Body of pancreas (tissue), 4 donors: ENCODE measurements at regions of chr22 and their contacts with region 1.

Region 1: GRCh38 chr22:19178656-19179496 is at the start of gene SLC25A1:
- DNase-seq: peak; percentile 94 to 98 (median 94)
- ATAC-seq: peak; percentile 87
- H3K4me3 ChIP-seq: peak within 1 kb of the TSS; percentile 35 to 86
- H3K27ac ChIP-seq: peak within 1 kb of the TSS; percentile 71 to 94 (median 92)
- H3K4me1 ChIP-seq: peaks cover 49% of the 10 kb centered on the region
- H3K27me3 ChIP-seq: no peaks in the 10 kb centered on the region
- CTCF ChIP-seq: no peak
- POLR2A ChIP-seq: peak; percentile 50 to 58 (median 54)
- total RNA-seq, gene SLC25A1: 39.7 to 87.0 TPM

Region 2: DNA sequence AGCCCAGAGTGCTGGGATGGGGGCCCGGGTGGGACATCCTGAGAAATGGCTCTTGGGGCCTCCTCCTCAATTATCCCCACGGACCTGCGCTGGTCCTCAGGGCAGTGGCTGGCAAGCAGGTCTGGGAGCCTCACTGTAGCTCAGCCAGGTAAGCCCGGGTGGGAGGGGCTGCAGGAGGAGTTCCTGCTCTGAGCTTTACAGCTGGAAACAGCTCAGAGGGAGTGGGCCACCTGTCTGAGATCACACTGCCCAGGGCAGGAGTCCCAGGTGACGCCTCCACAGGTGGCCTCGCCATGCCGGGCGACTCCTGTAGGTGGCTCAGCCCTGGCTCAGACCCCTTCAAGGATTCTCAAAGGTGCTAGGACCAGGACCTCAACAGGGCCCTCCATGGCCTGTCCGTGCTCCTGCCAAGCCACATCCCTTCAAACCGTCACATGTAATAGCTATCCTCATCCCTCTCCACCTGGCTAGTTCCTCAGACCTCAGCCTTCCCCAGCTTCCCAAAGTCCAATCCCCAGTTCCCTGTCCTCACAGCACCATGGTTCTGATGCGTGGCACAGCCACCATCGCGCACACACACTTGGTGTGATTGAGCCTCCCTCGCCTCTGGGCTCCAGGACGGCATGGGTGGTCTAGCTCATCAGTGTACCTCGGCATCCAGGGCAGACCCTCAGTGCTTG is 51.4 kb before region 1 on chr22:
- intact Hi-C with region 1: loop called (anchors 5 kb)
- DNase-seq: peak; percentile 76 to 93 (median 92)
- ATAC-seq: peak; percentile 63
- H3K4me3 ChIP-seq: no peak overlapping the region
- H3K27ac ChIP-seq: peak overlapping the region in 2 of 4 donors; percentile 2 to 51
- H3K4me1 ChIP-seq: peaks cover 18% of the 10 kb centered on the region
- H3K27me3 ChIP-seq: no peaks in the 10 kb centered on the region
- CTCF ChIP-seq: peak in 6 of 7 experiments; percentile 5 to 67 (median 42)
- POLR2A ChIP-seq: peak in 1 of 3 donors; percentile 28

Region 3: DNA sequence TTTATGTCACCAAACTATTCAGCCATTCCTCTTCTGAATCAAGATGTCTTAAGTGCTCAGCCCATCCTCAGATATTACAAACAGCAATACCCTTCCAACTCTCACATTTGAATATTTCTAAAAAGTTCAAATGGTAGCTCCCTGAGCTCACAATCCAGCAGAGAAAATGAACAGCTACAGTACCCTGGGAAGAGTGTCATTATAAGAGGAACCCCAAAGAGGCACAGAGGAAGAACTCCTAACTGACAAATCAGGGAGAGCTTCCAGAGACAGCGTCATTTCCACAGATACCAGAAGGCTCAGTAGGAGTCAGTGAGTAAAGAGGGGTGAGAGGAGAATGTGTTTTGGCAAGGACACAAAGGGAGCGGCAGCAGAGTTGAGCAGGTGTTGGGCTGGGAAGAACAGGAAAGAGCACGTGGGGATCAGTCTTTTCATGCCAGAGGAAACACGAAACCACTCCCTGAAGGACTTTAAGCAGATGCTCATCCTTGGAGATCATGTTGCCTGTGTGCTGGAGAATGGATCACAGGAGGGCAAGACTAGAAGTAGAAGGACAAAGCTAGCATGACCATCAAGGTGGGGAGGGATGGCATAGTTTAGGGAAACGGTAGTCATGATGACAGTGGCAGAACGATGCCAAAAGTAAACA is 108.3 kb after region 1 on chr22:
- intact Hi-C with region 1: loop called (anchors 10 kb)
- DNase-seq: no peak
- ATAC-seq: no peak
- H3K4me3 ChIP-seq: no peak overlapping the region
- H3K27ac ChIP-seq: no peak overlapping the region
- H3K4me1 ChIP-seq: peaks cover 10% of the 10 kb centered on the region
- H3K27me3 ChIP-seq: no peaks in the 10 kb centered on the region
- CTCF ChIP-seq: no peak
- POLR2A ChIP-seq: no peak

Region 4: GRCh38 chr22:19376247-19376646 is 197.4 kb after region 1 on chr22:
- intact Hi-C with region 1: no loop called
- DNase-seq: no peak
- ATAC-seq: no peak
- H3K4me3 ChIP-seq: no peak overlapping the region
- H3K27ac ChIP-seq: no peak overlapping the region
- H3K4me1 ChIP-seq: no peaks in the 10 kb centered on the region
- H3K27me3 ChIP-seq: no peaks in the 10 kb centered on the region
- CTCF ChIP-seq: no peak
- POLR2A ChIP-seq: no peak